ENCODE measurements at regions of chr7 and their contacts with region 1.

Region 1: DNA sequence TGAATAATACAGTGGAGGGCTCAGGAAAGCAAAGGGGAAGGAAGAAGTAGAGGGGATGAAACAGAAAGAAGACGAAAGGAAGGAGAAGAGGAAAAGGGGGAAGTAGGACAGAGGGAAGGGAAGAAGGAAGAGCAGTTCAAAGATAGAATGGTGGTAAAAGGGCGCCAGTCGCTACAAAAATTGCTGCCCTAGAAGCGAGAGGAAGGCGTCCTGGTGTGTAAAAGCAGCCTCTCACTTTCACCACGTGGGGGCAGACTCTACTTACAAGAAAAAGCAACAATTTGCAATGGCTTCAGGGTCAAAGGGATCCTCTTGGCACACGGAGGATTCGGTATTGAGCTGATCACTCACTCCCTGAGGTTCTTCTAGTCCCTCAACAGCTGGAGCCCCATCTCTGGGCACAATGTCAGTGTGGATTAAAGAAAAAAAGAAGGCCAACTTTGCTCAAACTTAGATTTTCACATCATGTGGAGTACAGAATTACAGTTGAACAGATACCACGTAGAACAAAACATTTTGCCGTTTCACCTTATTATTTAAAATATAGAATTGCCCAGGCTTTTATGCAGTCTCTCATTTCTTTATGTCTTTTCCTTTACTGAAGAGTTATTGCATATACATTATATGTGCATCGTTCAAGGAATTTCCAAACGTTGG is 31.4 kb upstream of the NPVF start:
- DNase-seq: peak; percentile 56
- CTCF ChIP-seq: peak; percentile 84

Region 2: GRCh38 chr7:24700521-24701260 is 559.0 kb before region 1 on chr7:
- in situ Hi-C with region 1: no loop called
- DNase-seq: no peak
- CTCF ChIP-seq: no peak

Region 3: GRCh38 chr7:25389489-25390106 is 129.9 kb after region 1 on chr7:
- in situ Hi-C with region 1: loop called (anchors 25 kb)
- DNase-seq: peak; percentile 21
- CTCF ChIP-seq: peak; percentile 8

Region 4: DNA sequence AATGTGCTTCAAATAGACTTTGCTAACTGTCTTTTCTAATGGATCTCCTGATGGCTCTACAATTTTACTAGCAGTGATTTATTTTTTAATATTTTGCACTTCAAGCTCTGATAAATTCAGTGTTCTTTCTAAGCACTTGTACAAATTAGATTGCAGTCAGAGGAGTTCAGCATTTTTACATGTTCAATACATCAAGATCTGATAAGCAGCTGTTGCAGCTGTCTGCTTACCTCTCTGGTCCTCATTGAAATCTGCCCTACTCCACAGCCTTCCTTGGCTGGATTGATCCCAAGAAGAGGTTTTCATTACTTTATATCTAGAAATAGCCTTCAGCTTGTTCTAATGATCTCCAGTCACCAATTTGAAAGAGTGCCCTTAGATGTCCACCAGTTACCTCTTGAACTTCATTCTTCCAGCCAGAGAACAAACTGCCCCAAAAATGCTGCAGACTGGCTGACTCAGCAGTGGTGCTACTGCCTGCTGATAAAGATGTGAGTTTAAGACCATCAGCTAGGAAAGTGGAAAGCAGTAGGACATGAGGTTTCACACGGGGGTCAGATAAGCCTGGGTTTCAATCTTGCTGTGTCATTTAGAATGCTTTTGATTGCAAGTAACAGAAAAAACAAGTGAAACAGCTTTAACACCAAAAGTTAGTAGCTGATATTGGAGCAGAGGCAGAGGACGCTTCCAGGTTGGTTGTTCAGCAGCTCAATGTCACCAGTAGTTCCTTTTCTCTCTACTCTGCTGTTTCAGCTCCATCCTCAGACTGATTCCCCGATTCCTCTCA is 319.5 kb after region 1 on chr7:
- in situ Hi-C with region 1: loop called (anchors 10 kb)
- DNase-seq: no peak
- CTCF ChIP-seq: no peak

Measured in GM13977 (cell line).